ENCODE measurements at regions of chr22 and their contacts with region 1.

Region 1: GRCh38 chr22:30191040-30191701 is 55.4 kb downstream of the LIF start:
- DNase-seq: no peak
- ATAC-seq: no peak
- H3K4me3 Mint-ChIP-seq: peak overlapping the region; percentile 74
- H3K27ac Mint-ChIP-seq: peak overlapping the region; percentile 90
- H3K4me1 Mint-ChIP-seq: peaks cover 86% of the 10 kb centered on the region
- H3K27me3 Mint-ChIP-seq: no peaks in the 10 kb centered on the region

Region 2: DNA sequence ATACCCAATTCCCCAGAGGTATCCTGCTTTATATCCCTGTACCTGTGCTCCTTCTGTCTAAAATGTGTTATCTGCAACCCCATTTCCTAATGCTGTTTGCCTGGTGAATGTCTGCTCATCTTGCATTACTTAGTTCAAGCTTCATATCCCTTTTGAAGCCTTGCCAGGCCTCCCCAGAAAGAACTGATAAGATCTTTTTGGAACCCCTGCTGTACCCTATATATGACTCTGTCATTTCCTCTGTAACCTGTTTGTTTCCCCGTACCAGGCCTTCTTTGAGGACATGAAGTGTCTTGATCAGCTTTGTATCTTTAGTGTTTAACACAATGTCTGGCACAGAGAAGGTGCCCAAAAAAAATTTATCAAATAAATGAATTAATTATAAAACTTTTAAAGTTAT is 22.2 kb before region 1 on chr22:
- POLR2A ChIA-PET with region 1: interaction called, 12 read pairs
- DNase-seq: no peak
- ATAC-seq: peak; percentile 78
- H3K4me3 Mint-ChIP-seq: no peak overlapping the region
- H3K27ac Mint-ChIP-seq: no peak overlapping the region
- H3K4me1 Mint-ChIP-seq: peaks cover 26% of the 10 kb centered on the region
- H3K27me3 Mint-ChIP-seq: no peaks in the 10 kb centered on the region

Measured in activated naive CD8-positive, alpha-beta T cell treated with anti-CD3 and anti-CD28 coated beads, Interleukin-2, amount 10 ng/mL, durations not matched to agents 7 days and 5 days (primary cell).